ENCODE measurements at regions of chrX and their contacts with region 1.

Region 1: DNA sequence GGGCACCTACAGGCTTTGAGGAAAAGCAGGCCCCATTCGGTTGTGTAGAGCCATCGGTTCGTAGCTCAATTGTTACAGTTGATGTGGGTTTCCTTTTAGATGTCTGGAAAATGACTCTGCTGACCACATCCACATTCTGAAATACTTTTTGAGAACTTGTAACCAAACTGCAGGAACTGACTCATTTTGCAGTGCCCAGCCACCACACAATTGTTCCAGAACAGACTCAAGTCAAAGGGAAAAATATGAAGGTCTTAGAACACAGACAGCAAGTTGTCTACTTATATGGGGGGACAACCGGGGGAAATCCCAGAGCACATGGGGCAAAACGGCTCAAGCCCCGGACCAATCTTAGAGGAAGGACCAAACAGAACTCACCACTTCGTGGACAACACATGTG is 557.6 kb upstream of the DIPK2B start:
- DNase-seq: peak; percentile 83
- ATAC-seq: peak; percentile 25
- H3K4me3 ChIP-seq: peak overlapping the region; percentile 20; the same call in 1 of the 2 replicates
- H3K27ac ChIP-seq: peak overlapping the region; percentile 92
- H3K4me1 ChIP-seq: peaks cover 92% of the 10 kb centered on the region
- H3K27me3 ChIP-seq: no peaks in the 10 kb centered on the region
- CTCF ChIP-seq: no peak

Region 2: GRCh38 chrX:44238206-44238605 is 1520.1 kb before region 1 on chrX:
- CTCF ChIA-PET with region 1: no interaction called
- POLR2A ChIA-PET with region 1: interaction called, 31 read pairs
- intact Hi-C with region 1: no loop called
- DNase-seq: no peak
- ATAC-seq: no peak
- H3K4me3 ChIP-seq: no peak overlapping the region
- H3K27ac ChIP-seq: no peak overlapping the region
- H3K4me1 ChIP-seq: peaks cover 2% of the 10 kb centered on the region; the same call in 1 of the 2 replicates
- H3K27me3 ChIP-seq: no peaks in the 10 kb centered on the region
- CTCF ChIP-seq: peak; percentile 22; the same call in 1 of the 2 replicates

Region 3: DNA sequence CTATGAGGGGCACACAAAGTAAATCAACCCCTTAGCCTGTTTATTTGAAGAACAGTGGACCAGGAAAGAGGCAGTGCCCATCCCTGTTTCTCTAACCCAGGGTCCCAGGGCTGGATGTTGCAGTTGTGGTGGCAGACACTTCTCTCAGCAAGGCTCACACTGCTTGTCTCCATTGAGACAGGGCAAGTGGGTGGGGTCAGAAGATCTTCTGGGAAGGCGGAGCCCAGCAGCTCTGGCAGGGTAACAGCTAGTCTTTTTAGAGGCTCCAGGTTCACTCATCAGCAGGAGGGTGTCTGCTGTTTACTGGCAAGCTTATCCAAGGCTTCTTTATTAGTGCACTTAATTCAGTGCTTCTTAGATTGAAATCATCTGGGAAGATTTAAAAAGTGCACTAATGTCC is 102.1 kb after region 1 on chrX:
- CTCF ChIA-PET with region 1: no interaction called
- POLR2A ChIA-PET with region 1: no interaction called
- intact Hi-C with region 1: no loop called
- DNase-seq: no peak
- ATAC-seq: no peak
- H3K4me3 ChIP-seq: no peak overlapping the region
- H3K27ac ChIP-seq: no peak overlapping the region
- H3K4me1 ChIP-seq: no peaks in the 10 kb centered on the region
- H3K27me3 ChIP-seq: no peaks in the 10 kb centered on the region
- CTCF ChIP-seq: no peak

Measured in PC-3 (cell line).